Sigmoid colon (tissue), 7 donors: ENCODE measurements at regions of chr4 and their contacts with region 1.

Region 1: GRCh38 chr4:124903995-124904722 is 191.6 kb upstream of the ANKRD50 start:
- DNase-seq: no peak
- H3K4me3 ChIP-seq: peak overlapping the region in 3 of 4 donors; percentile 16 to 33 (median 32)
- H3K27ac ChIP-seq: peak overlapping the region; percentile 33 to 64 (median 40)
- H3K4me1 ChIP-seq: peaks cover 0 to 22% (median 14%) of the 10 kb centered on the region in 4 donors
- H3K27me3 ChIP-seq: no peaks in the 10 kb centered on the region
- CTCF ChIP-seq: no peak
- EP300 ChIP-seq: no peak
- POLR2A ChIP-seq: no peak

Region 2: DNA sequence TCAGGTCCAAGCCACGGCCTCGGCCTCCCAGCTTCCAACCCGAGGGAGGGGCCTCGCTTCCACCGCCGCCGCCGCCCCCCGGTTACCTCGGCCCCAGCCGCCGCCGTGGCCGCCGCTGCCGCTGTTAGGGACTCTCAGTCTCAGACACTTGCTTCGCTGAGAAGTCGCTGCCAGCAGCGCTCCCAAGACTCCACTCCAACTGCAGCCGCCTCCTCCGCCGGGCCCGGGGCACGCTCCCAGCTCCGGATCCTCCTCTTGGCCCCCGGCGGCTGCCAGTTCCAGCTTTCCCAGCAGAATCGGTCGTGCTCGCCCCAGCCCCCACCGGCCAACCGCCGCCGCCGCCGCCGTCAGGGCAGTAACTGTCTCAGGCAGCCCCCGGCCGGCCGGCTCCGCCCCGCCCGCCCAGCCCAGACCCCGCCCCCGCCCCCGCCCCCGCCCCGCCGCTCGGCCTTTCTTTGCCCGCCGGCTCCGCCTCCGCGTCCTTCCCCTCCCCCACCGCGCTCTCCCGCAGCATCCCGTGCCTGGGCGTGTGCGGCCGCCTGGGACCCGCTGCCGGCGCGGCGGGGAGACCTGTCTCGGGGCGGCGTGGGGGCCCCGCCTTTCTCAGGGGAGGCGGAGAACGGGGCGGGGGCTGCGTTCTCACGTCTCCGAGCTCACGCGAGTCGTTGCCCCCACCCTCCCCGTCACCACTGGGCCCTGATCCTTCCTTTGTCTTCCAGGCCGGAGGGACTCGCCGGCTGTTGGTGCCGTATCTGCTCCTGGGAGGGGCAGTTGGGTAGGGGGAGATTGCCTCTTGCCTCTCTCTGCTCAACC is 191.6 kb before region 1 on chr4 and contains the start of gene ANKRD50:
- intact Hi-C with region 1: loop called (anchors 10 kb)
- DNase-seq: peak; percentile 95
- H3K4me3 ChIP-seq: peak within 1 kb of the TSS; percentile 62 to 94 (median 87)
- H3K27ac ChIP-seq: peak within 1 kb of the TSS; percentile 88 to 98 (median 96)
- H3K4me1 ChIP-seq: peaks cover 0 to 38% (median 22%) of the 10 kb centered on the region in 4 donors
- H3K27me3 ChIP-seq: no peaks in the 10 kb centered on the region
- CTCF ChIP-seq: no peak
- EP300 ChIP-seq: peak in 1 of 4 donors; percentile 49
- POLR2A ChIP-seq: peak; percentile 64 to 65
- total RNA-seq, gene ANKRD50: 12.5 to 24.9 (median 14.9) TPM